ENCODE measurements at regions of chr17 and their contacts with region 1.

Region 1: DNA sequence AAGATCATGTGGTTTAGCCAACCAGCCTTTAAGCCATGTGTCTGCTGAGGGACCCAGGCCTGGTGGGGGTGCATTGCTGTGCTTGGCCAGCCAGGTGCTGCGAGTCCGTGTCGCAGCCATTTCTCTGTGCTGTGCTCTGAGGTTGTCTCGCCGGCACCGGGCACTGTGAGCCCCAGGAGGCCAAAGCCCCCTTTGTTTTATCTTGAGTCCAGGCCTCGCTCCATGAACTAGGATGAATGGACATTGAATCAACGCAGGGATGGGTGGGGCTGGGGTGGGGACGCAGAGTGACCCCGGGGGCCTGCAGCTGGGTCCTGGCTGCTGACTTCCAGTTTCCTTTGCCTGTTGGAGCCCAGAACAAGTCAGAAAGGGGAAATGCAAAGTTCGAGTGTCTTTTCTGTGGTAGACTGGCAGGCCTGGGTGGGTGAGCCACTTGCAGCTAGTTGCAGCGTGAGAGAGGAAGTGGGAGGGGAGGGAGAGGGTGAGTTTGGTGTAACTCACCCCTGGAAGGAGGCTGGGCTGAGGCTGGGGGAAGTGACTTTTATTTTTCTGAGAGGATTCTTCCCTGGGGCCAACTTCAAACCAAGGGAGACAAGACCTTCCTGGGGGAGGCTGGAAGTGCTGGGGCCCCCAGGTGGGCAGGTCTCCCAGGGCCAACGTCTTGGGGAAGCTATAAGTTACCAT is 324.7 kb downstream of the SEC14L1 start:
- DNase-seq: peak; percentile 92
- H3K4me3 Mint-ChIP-seq: peak overlapping the region; percentile 62
- H3K27ac Mint-ChIP-seq: peak overlapping the region; percentile 93
- H3K4me1 Mint-ChIP-seq: peaks cover 86% of the 10 kb centered on the region
- H3K27me3 Mint-ChIP-seq: no peaks in the 10 kb centered on the region

Region 2: GRCh38 chr17:77444984-77445759 is 20.3 kb before region 1 on chr17:
- CTCF ChIA-PET with region 1: interaction called, 10 read pairs
- intact Hi-C with region 1: loop called (anchors 1 kb)
- DNase-seq: peak; percentile 87
- H3K4me3 Mint-ChIP-seq: peak overlapping the region; percentile 58
- H3K27ac Mint-ChIP-seq: peak overlapping the region; percentile 94
- H3K4me1 Mint-ChIP-seq: peaks cover 89% of the 10 kb centered on the region
- H3K27me3 Mint-ChIP-seq: no peaks in the 10 kb centered on the region

Region 3: DNA sequence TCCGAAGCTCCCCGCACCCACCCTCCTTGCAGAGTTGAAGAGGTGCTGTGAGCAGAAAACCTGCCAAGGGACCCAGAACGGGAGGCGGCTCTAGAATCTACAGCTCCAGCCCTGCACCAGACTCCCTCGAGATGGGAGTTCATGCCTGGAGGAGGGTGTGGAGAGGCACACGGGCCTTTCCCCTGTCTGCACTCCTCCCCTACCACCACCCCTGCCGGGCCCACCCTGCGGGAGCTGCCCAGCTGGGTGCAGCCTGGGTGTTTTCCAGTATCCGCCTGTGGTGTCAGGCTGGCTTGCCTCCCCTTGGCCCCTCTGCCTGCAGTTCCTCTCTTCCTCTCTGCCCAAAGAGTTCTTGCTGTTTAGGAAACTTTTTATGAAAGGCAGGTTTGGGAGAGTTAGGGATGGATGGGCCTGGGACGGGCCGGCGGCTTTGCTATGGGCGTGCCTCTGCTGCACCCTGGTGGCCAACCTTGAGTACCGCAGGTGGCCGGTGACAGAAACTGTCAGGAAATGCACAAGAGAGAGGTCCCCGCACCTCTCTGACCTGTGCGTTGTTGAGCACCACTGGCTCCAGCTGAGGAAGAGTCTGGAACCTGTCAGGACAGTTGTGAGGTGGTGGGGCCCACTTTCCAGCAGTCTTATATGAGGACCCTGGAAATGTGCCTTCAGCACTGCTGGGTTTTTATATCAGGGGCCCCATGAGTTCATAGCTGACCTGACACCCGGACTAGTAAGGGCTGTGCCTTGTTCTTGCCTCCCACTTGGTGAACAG is 29.4 kb after region 1 on chr17:
- CTCF ChIA-PET with region 1: interaction called, 12 read pairs
- intact Hi-C with region 1: no loop called
- DNase-seq: peak; percentile 81
- H3K4me3 Mint-ChIP-seq: no peak overlapping the region
- H3K27ac Mint-ChIP-seq: peak overlapping the region; percentile 77
- H3K4me1 Mint-ChIP-seq: peaks cover 11% of the 10 kb centered on the region
- H3K27me3 Mint-ChIP-seq: no peaks in the 10 kb centered on the region

Measured in activated naive CD4-positive, alpha-beta T cell treated with anti-CD3 and anti-CD28 coated beads for 36 hours (primary cell).